Activated CD4-positive, alpha-beta memory T cell treated with anti-CD3 and anti-CD28 coated beads for 36 hours (primary cell): ENCODE measurements at regions of chr14 and their contacts with region 1.

Region 1: DNA sequence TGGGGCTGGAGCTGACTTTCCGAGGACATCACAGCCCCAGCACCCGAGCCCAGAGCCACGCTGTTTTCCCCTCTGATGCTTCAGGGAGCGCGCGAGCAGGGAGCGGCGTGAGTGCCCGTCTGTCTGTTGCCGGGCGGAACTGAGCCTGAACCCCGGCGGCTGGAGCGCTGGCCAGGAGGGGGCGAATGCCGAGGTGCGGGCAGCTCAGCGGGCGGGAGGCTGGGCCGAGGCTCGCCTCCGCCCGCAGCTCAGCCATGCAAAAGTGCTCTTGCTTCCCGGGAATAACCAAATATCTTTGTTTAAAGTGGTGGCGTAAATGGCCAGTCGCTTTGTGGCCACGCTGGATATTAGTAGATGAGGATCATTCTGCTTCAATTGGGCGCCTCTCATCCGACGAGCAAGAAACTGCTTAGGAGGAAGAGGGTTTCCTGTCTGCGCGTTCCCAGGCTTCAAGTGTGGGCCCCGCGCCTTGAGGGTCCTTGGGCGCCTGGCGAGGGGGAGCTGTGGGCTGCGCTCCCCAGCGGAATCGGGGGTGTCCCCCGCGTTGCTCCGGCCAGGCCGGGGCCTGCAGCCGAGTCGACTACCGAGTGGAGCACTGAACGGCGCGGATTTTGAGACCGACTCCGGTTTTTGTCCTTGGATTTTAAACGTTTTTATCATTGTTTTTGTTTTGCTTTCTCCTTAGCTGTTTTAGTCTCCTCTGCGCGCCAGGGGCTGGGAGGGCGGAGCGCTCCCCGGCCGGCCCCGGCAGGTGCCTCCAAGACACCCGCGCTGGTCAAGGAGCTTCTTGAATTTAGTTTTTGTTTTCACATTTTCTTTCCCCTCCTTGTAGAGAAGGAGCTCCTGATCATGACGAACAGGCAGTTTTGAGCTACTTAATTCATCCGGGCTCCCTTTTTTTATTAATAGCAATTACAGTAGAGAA is 831 bp upstream of the NKX2-1 start:
- DNase-seq: no peak
- H3K4me3 Mint-ChIP-seq: peak overlapping the region; percentile 26
- H3K27ac Mint-ChIP-seq: no peak overlapping the region
- H3K4me1 Mint-ChIP-seq: peaks cover 15% of the 10 kb centered on the region
- H3K27me3 Mint-ChIP-seq: peaks cover 67% of the 10 kb centered on the region

Region 2: GRCh38 chr14:36505181-36505815 is 15.6 kb before region 1 on chr14:
- CTCF ChIA-PET with region 1: interaction called, 5 read pairs
- POLR2A ChIA-PET with region 1: no interaction called
- intact Hi-C with region 1: loop called (anchors 2 kb)
- DNase-seq: peak; percentile 36
- H3K4me3 Mint-ChIP-seq: no peak overlapping the region
- H3K27ac Mint-ChIP-seq: no peak overlapping the region
- H3K4me1 Mint-ChIP-seq: peaks cover 18% of the 10 kb centered on the region
- H3K27me3 Mint-ChIP-seq: peaks cover 70% of the 10 kb centered on the region

Region 3: DNA sequence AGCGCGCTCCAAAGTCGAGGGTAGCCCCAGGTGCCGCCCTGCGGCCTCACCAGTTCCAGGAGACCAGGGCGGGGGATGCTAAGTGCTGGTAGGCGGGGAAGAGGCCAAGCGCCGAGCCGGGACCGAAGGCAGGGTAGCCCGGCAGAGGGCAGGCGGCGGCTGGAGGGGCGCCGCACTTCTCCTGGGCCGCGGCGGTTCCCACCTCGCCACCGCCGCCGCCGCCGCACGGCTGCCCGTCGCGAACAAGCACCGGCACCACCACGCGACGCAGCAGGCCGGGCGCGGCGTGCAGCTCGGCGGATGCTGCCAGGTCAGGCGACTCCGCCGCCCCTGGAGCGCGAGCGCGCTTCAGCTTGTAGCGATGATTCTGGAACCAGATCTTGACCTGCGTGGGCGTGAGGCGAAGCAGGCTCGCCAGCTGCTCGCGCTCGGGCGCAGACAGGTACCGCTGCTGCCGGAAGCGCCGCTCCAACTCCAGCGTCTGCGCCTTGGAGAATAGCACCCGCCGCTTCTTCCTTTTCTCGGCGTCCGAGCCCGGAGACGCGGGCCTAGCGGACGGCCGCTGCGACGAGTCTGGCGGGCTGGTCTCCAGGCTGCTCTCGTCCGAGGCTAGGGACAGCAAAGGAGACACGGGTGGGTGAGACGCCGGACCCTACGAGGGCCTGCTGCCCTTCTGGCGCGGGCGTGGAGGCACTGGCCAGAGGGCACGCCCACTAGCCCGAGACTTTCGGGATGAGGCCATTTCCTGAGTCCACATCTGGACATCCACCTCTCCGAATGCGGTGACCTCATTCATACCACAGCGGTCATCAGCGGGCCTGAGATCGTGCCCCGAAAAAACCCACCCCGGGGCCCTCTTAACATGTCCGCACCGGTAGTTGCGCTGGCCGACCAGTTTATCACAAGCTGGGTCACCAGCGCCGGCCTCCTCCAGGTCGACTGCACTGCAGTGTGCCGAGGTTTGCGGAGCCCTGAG is 60.3 kb after region 1 on chr14:
- CTCF ChIA-PET with region 1: interaction called, 3 read pairs
- POLR2A ChIA-PET with region 1: no interaction called
- intact Hi-C with region 1: loop called (anchors 2 kb)
- DNase-seq: peak; percentile 37
- H3K4me3 Mint-ChIP-seq: no peak overlapping the region
- H3K27ac Mint-ChIP-seq: no peak overlapping the region
- H3K4me1 Mint-ChIP-seq: no peaks in the 10 kb centered on the region
- H3K27me3 Mint-ChIP-seq: peaks cover 60% of the 10 kb centered on the region

Region 4: GRCh38 chr14:36661756-36662498 is 141.1 kb after region 1 on chr14 and contains the start of gene PAX9:
- CTCF ChIA-PET with region 1: no interaction called
- POLR2A ChIA-PET with region 1: no interaction called
- intact Hi-C with region 1: loop called (anchors 2 kb)
- DNase-seq: peak; percentile 73
- H3K4me3 Mint-ChIP-seq: no peak within 1 kb of the TSS
- H3K27ac Mint-ChIP-seq: no peak within 1 kb of the TSS
- H3K4me1 Mint-ChIP-seq: peaks cover 47% of the 10 kb centered on the region
- H3K27me3 Mint-ChIP-seq: peaks cover 76% of the 10 kb centered on the region
- total RNA-seq, gene PAX9: not detected